ENCODE measurements at regions of chr1 and their contacts with region 1.

Region 1: GRCh38 chr1:46401964-46402626 is 8.0 kb downstream of the FAAH start:
- DNase-seq: peak; percentile 43
- ATAC-seq: peak; percentile 90
- H3K4me3 ChIP-seq: peak overlapping the region in 1 of 2 experiments; percentile 20; a peak in 1 of 4 replicates
- H3K27ac ChIP-seq: no peak overlapping the region
- H3K4me1 ChIP-seq: peaks cover 8 to 18% of the 10 kb centered on the region in 2 experiments; a peak in 3 of 4 replicates
- H3K27me3 ChIP-seq: no peaks in the 10 kb centered on the region
- CTCF ChIP-seq: no peak
- POLR2A ChIP-seq: no peak
- RAD21 ChIP-seq: no peak

Region 2: GRCh38 chr1:46477153-46477929 is 75.2 kb after region 1 on chr1:
- CTCF ChIA-PET with region 1: no interaction called
- POLR2A ChIA-PET with region 1: no interaction called
- RAD21 ChIA-PET with region 1: no interaction called
- intact Hi-C with region 1: loop called (anchors 1 kb)
- DNase-seq: peak; percentile 41
- ATAC-seq: peak; percentile 96
- H3K4me3 ChIP-seq: no peak overlapping the region
- H3K27ac ChIP-seq: no peak overlapping the region
- H3K4me1 ChIP-seq: peaks cover 0 to 4% of the 10 kb centered on the region in 2 experiments; a peak in 2 of 4 replicates
- H3K27me3 ChIP-seq: no peaks in the 10 kb centered on the region
- CTCF ChIP-seq: peak; percentile 89 to 95 (median 89)
- POLR2A ChIP-seq: no peak
- RAD21 ChIP-seq: peak; percentile 94

Measured in HCT116 (cell line).